ENCODE measurements at regions of chr1 and their contacts with region 1.

Region 1: DNA sequence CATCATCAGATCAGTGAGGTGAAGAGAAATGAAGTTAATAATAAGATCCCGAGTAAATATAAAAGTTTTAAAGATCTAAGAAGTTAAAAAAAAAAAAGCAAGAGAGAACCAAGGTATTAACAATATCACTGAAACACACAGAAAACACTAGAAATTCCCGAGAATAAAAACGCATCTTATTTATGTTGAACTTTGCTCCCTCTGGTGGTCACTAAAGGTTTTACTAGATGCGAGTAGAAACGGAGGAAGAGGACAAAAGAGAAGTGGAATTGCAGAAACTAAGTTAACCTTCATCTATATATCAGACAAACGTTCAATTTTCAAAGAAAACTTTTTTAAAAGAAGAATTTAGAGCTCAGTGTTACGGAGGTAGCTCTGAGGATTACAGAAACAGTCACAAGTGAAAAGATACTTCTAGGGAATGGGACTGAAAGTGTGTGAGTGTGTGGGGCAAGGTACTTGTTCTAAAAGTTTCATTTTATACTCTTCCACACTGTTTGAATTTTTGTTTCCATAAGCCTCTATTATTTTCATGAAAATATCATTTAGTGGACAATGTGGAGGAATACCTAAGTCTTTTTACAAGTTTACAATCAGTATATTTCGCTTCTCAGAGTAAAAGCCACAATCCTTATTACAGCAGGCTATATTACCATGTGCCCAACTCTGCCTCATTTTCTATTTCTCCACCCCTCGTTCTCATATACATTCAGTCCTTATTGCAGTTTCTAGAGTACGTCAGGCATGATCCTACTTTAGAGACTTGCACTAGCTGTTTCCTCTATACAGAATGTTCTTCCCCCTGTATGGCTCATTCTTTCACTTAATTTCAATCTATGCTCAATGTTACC is 19.7 kb downstream of the ACBD6 start:
- DNase-seq: peak; percentile 36
- ATAC-seq: peak; percentile 73
- H3K4me3 ChIP-seq: no peak overlapping the region
- H3K27ac ChIP-seq: no peak overlapping the region
- H3K4me1 ChIP-seq: peaks cover 3% of the 10 kb centered on the region; the same call in 1 of the 2 replicates
- H3K27me3 ChIP-seq: no peaks in the 10 kb centered on the region
- CTCF ChIP-seq: peak; percentile 74; the same call in 1 of the 2 replicates

Region 2: DNA sequence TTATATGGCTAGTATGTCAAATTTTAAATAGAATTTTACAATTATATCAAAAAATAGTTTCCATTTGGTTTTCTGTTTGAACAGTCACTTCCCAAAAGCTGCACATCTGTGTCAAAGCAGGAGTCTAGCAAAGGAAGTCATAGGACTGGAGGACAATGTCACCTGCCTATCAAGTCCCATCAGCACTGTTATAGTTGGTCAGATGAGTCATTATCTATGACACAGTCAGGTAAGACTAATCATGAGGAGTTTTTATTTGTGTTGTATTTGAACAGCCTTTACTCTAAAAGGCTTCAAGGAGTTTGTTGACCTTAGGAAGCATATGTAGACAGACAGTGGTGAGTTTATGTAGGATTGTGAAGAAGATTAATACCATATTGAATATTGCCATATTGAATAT is 402.2 kb before region 1 on chr1:
- CTCF ChIA-PET with region 1: interaction called, 12 read pairs
- POLR2A ChIA-PET with region 1: no interaction called
- in situ Hi-C with region 1: no loop called
- intact Hi-C with region 1: no loop called
- DNase-seq: peak; percentile 53
- ATAC-seq: 0 out of 2 replicates have a peak, but pooled peaks have one; percentile 56
- H3K4me3 ChIP-seq: no peak overlapping the region
- H3K27ac ChIP-seq: no peak overlapping the region
- H3K4me1 ChIP-seq: no peaks in the 10 kb centered on the region
- H3K27me3 ChIP-seq: no peaks in the 10 kb centered on the region
- CTCF ChIP-seq: no peak

Region 3: DNA sequence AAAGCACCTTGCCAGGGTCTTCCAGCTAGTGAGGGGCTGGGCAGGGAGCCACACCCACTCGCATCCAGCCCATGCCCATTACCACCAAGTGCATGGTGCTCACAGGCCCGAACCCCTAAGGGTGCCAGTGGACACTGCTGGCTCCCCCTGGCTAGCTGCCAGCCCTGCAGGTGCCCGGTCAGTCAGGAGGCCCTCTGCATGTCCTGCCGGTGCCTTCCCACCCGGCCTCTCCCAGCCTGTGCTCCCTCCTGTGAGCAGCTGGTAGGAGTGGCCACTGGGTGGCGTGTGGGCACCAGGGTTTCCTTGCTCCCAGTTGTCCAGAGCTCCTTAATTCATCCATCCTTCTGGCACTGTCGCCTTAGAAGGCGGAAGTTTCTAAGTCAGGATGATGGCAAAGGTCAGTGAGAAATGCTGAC is 294.6 kb before region 1 on chr1:
- CTCF ChIA-PET with region 1: interaction called, 3 read pairs
- POLR2A ChIA-PET with region 1: no interaction called
- in situ Hi-C with region 1: no loop called
- intact Hi-C with region 1: loop called (anchors 5 kb)
- DNase-seq: peak; percentile 15
- ATAC-seq: peak; percentile 95
- H3K4me3 ChIP-seq: no peak overlapping the region
- H3K27ac ChIP-seq: no peak overlapping the region
- H3K4me1 ChIP-seq: no peaks in the 10 kb centered on the region
- H3K27me3 ChIP-seq: no peaks in the 10 kb centered on the region
- CTCF ChIP-seq: peak; percentile 94

Region 4: GRCh38 chr1:180252638-180253536 is 229.8 kb before region 1 on chr1:
- CTCF ChIA-PET with region 1: no interaction called
- POLR2A ChIA-PET with region 1: no interaction called
- in situ Hi-C with region 1: no loop called
- intact Hi-C with region 1: loop called (anchors 2 kb)
- DNase-seq: peak; percentile 58
- ATAC-seq: peak; percentile 73
- H3K4me3 ChIP-seq: no peak overlapping the region
- H3K27ac ChIP-seq: no peak overlapping the region
- H3K4me1 ChIP-seq: no peaks in the 10 kb centered on the region
- H3K27me3 ChIP-seq: no peaks in the 10 kb centered on the region
- CTCF ChIP-seq: peak; percentile 93

Region 5: GRCh38 chr1:180571832-180572636 is 89.4 kb after region 1 on chr1:
- CTCF ChIA-PET with region 1: no interaction called
- POLR2A ChIA-PET with region 1: no interaction called
- in situ Hi-C with region 1: no loop called
- intact Hi-C with region 1: no loop called
- DNase-seq: no peak
- ATAC-seq: no peak
- H3K4me3 ChIP-seq: no peak overlapping the region
- H3K27ac ChIP-seq: no peak overlapping the region
- H3K4me1 ChIP-seq: no peaks in the 10 kb centered on the region
- H3K27me3 ChIP-seq: no peaks in the 10 kb centered on the region; the same call in 1 of the 2 replicates
- CTCF ChIP-seq: no peak

Measured in Panc1 (cell line).